Right ventricle myocardium superior (tissue), 1 donor: ENCODE measurements at regions of chr13 and their contacts with region 1.

Region 1: DNA sequence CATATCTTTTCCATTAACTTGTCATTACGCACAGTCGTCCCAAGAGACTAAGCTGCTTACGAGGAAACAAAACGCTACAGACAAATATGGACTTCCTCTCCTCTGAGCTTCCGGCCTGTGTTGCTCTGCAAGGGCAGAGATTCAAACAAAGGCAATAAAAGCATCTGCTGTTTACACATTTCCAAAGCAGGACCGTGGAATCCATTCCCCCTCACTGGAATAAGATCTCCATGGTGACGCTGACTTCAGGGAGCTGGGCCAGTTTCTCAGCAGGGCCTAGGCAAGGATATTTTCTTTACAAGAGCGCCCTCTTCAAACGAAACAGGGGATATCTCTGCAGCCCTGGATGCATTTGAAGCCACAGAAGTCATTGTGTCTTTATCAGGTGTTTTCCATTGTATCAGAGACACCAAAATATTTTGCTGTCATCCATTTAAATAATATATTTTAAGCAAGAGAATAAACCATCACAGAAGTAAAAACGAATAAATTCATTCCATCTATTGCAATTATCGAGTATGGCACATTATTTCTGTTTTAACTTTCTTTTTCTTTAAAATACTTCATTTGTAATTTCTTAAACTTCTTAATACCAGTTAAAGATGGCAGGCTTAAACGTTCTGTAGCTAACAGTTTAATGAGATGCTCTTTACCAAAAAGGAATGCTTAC is 177.5 kb downstream of the DCLK1 start:
- DNase-seq: peak; percentile 78
- ATAC-seq: peak; percentile 87

Region 2: GRCh38 chr13:35771898-35772297 is 181.8 kb before region 1 on chr13:
- intact Hi-C with region 1: no loop called
- DNase-seq: no peak
- ATAC-seq: peak; percentile 24

Region 3: DNA sequence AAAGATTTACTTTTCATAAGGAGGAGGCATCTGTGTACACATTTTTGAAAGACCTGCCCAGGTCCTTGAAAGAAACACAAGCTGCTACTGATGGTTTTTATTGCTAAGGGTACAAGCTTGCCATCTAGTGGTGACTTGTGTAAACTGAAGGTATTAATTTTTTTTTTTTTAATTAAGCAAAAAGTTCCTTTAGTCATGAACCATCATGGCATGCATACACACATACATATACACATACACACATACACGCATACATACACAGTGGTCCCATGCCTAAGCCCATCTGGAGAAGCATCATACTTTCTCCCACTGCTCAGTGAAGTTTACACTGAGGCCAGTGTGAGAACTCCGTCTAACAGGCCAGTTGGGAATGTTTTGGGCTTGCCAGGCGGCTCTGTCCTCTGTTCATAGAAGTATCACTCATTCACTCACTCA is 135.0 kb before region 1 on chr13:
- intact Hi-C with region 1: loop called (anchors 10 kb)
- DNase-seq: no peak
- ATAC-seq: peak; percentile 68